ENCODE measurements at regions of chr9 and their contacts with region 1.

Region 1: DNA sequence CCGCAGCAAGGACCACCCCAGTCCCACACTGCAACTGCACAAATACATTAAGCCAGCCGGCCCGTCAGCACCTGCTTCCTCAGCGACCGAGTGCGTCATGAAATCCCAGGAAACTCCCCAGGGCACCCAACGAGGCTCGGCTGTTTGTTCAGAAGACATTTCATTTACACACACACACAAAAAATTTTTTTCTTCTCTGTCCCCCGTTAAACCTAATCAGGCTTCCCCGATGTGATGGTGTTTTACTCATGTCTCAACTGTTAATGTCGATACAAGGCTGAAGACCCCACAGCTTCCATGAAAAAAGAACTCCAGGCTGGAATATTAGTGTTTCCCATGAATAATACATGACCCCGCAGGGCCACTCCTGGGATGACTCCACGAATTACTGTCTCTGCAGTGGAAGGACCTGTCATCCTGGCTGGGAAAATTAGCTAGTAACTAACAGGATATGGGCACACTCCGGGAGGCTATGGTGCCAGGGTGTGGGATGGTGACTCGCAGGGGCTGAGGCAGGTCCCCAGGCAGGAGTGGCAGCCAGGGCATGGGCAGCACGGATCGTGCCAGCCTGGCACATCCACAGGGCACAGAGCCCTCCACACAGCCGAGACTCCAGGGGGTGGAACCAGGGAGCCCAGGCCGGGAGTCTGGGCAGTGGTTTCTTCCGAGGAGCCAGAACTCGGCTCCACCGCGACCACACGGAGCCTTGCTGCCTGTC is 102.4 kb downstream of the VAV2 start:
- DNase-seq: no peak
- ATAC-seq: peak in 1 of 2 donors; percentile 24
- H3K4me3 ChIP-seq: no peak overlapping the region
- H3K27ac ChIP-seq: no peak overlapping the region
- H3K4me1 ChIP-seq: no peaks in the 10 kb centered on the region
- H3K27me3 ChIP-seq: no peaks in the 10 kb centered on the region

Region 2: GRCh38 chr9:133821601-133822429 is 67.9 kb before region 1 on chr9:
- intact Hi-C with region 1: loop called in 1 of 4 experiments (anchors 10 kb)
- DNase-seq: peak in 1 of 3 donors; percentile 15
- ATAC-seq: no peak
- H3K4me3 ChIP-seq: no peak overlapping the region
- H3K27ac ChIP-seq: no peak overlapping the region
- H3K4me1 ChIP-seq: no peaks in the 10 kb centered on the region
- H3K27me3 ChIP-seq: no peaks in the 10 kb centered on the region

Measured in right cardiac atrium (tissue), 5 donors.